OCI-LY7 (cell line): ENCODE measurements at regions of chr4 and their contacts with region 1.

Region 1: DNA sequence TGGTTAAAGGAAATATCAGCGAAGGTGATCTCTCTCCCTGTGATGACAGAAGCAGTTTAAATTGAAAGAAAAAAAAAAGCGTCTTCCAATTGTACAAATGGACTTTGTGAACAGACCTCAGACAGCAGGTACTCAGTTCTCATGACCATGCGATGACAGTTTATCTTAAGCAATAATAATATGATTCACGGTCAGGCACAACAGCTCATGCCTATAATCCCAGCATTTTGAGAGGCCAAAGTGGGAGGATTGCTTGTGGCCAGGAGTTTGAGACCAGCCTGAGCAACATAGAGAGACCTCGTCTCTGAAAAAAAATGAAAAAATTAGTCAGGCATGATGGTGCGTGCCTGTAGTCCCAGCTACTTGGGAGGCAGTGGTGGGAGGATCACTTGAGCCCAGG is 51.0 kb downstream of the RELL1 start:
- DNase-seq: no peak
- H3K4me3 ChIP-seq: no peak overlapping the region
- H3K27ac ChIP-seq: no peak overlapping the region
- H3K4me1 ChIP-seq: no peaks in the 10 kb centered on the region
- CTCF ChIP-seq: no peak

Region 2: DNA sequence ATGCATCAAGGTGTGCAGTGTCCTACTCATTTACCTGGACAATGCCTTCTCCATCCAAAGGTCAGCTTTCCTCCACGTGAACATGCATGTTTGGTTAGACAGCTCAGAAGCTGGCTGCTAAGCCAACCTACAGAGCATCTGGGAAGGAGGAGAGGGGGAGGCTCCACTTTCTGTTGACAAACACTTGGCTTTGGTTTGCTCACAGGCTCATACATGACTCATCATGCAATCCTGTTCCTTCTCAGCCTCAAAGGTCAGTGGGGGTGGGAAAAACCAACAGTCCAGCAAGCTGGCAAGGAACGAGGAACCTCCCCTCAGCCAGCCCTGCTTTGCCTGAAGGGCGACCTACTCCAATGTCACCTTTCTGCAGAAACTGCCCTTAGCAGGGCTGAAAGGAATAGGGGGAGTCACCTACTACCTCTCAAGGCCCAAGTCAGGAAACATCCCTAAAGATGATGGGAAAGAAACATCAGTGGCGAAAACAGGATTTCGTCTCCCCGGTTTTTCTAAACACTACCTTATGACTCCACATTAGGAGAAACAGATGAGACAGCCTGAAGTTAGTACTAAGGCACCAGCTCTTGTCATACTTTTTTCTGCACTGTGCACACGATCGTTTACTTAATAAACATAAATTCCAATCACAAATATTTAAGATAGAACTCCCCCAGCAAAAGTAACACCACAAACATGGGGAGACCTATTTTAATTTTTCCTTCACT is 13.1 kb after region 1 on chr4:
- CTCF ChIA-PET with region 1: interaction called, 5 read pairs
- POLR2A ChIA-PET with region 1: interaction called, 12 read pairs
- intact Hi-C with region 1: no loop called
- DNase-seq: no peak
- H3K4me3 ChIP-seq: no peak overlapping the region
- H3K27ac ChIP-seq: no peak overlapping the region
- H3K4me1 ChIP-seq: peaks cover 27% of the 10 kb centered on the region
- CTCF ChIP-seq: no peak

Region 3: DNA sequence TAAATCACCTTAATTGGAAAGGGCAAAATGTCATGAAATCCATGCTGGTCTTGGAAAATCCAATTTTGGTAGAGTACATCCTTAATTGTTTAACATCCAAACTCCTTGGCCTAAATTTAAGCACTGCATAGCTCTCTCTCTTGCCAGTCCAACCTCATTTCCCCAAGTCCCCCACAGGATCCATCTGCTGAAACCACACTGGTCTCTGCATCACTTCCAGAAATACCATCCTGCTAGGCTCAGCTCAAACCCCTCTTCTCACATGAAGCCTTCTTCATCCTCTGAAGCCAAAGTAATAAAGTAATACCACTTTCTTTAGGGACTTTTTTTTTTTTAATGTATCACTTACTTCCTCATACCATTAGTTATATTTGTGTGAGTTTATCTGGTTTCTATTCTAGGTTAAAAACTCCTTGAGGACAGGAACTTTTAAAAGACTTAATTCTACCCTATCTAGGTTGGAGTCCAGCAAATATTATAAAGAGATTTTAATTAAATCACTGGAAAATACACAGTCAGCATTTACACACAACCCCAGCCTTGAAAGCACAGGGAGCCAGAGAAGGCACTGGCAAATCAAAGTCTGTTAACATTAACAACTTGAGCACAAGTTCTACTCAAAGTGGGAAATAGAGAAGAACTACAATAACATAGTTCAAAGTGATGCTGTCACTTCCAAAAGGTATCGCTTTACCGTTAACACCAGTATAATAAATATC is 1012.1 kb after region 1 on chr4:
- CTCF ChIA-PET with region 1: no interaction called
- POLR2A ChIA-PET with region 1: no interaction called
- intact Hi-C with region 1: no loop called
- DNase-seq: no peak
- H3K4me3 ChIP-seq: no peak overlapping the region
- H3K27ac ChIP-seq: no peak overlapping the region
- H3K4me1 ChIP-seq: no peaks in the 10 kb centered on the region
- CTCF ChIP-seq: no peak